Dendritic cell treated with granulocyte-macrophage colony-stimulating factor and Interleukin-4, amounts not matched to agents 40 ng/mL and 50 ng/mL, for 4 days (primary cell): ENCODE measurements at regions of chr7 and their contacts with region 1.

Region 1: GRCh38 chr7:24812310-24812945 is 55.2 kb upstream of the GSDME start:
- H3K4me3 Mint-ChIP-seq: no peak overlapping the region
- H3K27ac Mint-ChIP-seq: no peak overlapping the region
- H3K4me1 Mint-ChIP-seq: no peaks in the 10 kb centered on the region
- H3K27me3 Mint-ChIP-seq: no peaks in the 10 kb centered on the region

Region 2: DNA sequence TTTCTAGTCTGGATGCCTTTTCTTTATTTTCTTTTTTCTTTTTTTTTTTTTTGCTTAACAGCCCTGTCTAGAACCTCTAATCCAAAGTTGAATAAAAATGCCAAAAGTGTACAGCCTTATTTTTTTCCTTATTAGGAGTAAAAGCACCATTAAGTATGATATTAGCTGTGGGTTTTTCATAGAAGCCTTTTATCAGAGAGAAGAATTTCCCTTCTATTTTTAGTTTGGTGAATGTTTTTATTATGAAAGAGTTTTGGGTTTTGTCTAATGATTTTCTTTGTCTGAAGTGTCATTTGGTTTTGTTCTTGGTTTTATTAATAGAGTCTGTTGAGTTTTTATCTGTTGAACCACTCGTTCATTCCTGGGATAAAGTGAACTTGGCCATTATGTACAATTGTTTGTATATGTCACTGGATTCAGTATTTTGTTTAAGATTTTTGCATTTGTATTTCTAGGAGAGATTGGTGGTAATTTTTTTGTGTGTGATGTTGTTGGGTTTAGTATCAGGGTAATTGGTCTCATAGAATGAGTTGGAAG is 189.7 kb before region 1 on chr7:
- intact Hi-C with region 1: no loop called
- H3K4me3 Mint-ChIP-seq: no peak overlapping the region
- H3K27ac Mint-ChIP-seq: no peak overlapping the region
- H3K4me1 Mint-ChIP-seq: no peaks in the 10 kb centered on the region
- H3K27me3 Mint-ChIP-seq: no peaks in the 10 kb centered on the region

Region 3: DNA sequence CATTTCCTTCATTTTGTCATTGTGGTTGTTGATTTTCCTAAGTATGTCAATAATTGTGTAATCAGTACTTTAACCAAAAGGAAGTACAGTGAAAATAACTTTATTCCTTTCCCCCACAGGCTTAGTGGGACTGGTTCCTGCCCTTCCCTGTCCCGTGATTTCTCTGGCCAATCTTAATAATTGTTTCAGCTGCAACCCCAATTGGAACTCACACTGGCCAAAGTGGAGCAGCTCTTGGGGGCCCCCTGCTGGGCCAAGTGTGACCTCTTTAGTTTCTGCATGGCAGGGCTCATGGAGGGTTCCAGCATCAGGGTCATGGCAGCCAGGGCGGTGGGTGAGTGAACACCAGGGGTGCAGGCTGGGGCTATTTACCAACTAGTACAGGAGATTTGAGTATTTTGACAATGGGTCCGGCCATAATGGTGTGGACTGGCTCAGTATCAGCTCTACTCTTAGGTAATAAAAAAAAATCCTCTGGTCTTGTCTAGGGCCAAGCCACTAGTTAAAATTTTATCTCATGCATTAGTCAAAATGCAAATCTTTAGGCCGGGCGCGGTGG is 280.9 kb after region 1 on chr7:
- intact Hi-C with region 1: loop called (anchors 1 kb)
- H3K4me3 Mint-ChIP-seq: no peak overlapping the region
- H3K27ac Mint-ChIP-seq: no peak overlapping the region
- H3K4me1 Mint-ChIP-seq: peaks cover 12% of the 10 kb centered on the region
- H3K27me3 Mint-ChIP-seq: peaks cover 6% of the 10 kb centered on the region